Common myeloid progenitor, CD34-positive (primary cell): ENCODE measurements at regions of chr18 and their contacts with region 1.

Region 1: GRCh38 chr18:5879479-5879882 is 15.8 kb downstream of the TMEM200C start:
- DNase-seq: no peak
- H3K4me3 ChIP-seq: no peak overlapping the region
- H3K27ac ChIP-seq: no peak overlapping the region
- H3K4me1 ChIP-seq: no peaks in the 10 kb centered on the region
- H3K27me3 ChIP-seq: peaks cover 0 to 29% (median 2%) of the 10 kb centered on the region in 5 experiments

Region 2: GRCh38 chr18:4888251-4889040 is 991.0 kb before region 1 on chr18:
- CTCF ChIA-PET with region 1: no interaction called
- POLR2A ChIA-PET with region 1: no interaction called
- DNase-seq: no peak
- H3K4me3 ChIP-seq: no peak overlapping the region
- H3K27ac ChIP-seq: no peak overlapping the region
- H3K4me1 ChIP-seq: no peaks in the 10 kb centered on the region
- H3K27me3 ChIP-seq: no peaks in the 10 kb centered on the region

Region 3: DNA sequence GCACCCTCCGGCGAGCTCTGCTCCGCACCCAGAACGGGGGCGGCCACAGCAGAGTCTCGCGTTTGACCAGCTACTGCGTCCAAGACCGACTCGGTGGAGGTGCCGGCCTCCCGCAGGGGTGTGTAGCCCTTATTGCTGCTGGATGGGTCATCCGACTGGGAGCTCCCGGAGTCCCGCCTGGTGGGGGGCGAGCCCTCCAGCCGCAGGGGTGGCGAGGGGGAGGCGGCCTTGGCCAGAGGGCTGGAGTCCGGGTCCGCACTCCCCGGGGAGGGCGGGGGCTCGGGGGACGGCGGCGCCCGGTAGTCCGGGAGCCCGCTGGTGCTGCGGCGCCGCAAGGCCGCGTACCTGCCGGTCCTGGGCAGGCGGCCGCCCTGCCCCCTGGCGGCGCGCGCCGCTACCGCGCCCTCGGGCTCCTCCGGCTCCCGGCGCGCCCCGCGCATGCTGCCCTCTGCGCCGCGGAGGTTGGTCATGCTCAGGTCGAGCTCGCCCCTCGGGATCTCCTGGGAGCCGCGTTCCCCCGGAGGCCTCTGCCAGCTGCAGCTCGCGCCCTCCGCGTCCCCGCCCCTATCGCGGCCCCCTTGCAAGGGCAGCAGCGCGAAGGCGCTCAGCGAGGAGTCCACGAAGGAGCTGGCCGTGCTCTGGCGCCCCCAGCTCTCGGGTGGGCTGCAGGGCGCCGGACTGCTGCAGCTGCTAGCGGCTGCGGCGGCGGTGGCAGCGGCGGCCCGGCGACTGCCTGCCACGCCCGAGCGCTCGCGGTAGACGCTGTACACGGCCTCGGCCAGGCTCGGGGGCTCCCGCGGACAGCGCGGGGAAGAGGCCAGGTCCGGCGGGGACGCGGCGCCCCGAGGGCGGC is 11.1 kb after region 1 on chr18:
- CTCF ChIA-PET with region 1: interaction called, 11 read pairs
- POLR2A ChIA-PET with region 1: no interaction called
- DNase-seq: peak; percentile 49 to 73 (median 68)
- H3K4me3 ChIP-seq: peak overlapping the region; percentile 19 to 70 (median 52)
- H3K27ac ChIP-seq: no peak overlapping the region
- H3K4me1 ChIP-seq: peaks cover 0 to 23% (median 10%) of the 10 kb centered on the region in 4 experiments
- H3K27me3 ChIP-seq: peaks cover 23 to 88% (median 39%) of the 10 kb centered on the region in 5 experiments

Region 4: GRCh38 chr18:5903386-5903785 is 23.9 kb after region 1 on chr18:
- CTCF ChIA-PET with region 1: no interaction called
- POLR2A ChIA-PET with region 1: no interaction called
- DNase-seq: no peak
- H3K4me3 ChIP-seq: no peak overlapping the region
- H3K27ac ChIP-seq: no peak overlapping the region
- H3K4me1 ChIP-seq: no peaks in the 10 kb centered on the region
- H3K27me3 ChIP-seq: peaks cover 4 to 50% (median 11%) of the 10 kb centered on the region in 5 experiments

Region 5: GRCh38 chr18:6482198-6482977 is 602.9 kb after region 1 on chr18:
- CTCF ChIA-PET with region 1: interaction called, 37 read pairs
- POLR2A ChIA-PET with region 1: no interaction called
- DNase-seq: peak; percentile 53 to 66 (median 62)
- H3K4me3 ChIP-seq: no peak overlapping the region
- H3K27ac ChIP-seq: no peak overlapping the region
- H3K4me1 ChIP-seq: no peaks in the 10 kb centered on the region
- H3K27me3 ChIP-seq: peaks cover 0 to 10% (median 5%) of the 10 kb centered on the region in 5 experiments